OCI-LY7 (cell line): ENCODE measurements at regions of chr13 and their contacts with region 1.

Region 1: DNA sequence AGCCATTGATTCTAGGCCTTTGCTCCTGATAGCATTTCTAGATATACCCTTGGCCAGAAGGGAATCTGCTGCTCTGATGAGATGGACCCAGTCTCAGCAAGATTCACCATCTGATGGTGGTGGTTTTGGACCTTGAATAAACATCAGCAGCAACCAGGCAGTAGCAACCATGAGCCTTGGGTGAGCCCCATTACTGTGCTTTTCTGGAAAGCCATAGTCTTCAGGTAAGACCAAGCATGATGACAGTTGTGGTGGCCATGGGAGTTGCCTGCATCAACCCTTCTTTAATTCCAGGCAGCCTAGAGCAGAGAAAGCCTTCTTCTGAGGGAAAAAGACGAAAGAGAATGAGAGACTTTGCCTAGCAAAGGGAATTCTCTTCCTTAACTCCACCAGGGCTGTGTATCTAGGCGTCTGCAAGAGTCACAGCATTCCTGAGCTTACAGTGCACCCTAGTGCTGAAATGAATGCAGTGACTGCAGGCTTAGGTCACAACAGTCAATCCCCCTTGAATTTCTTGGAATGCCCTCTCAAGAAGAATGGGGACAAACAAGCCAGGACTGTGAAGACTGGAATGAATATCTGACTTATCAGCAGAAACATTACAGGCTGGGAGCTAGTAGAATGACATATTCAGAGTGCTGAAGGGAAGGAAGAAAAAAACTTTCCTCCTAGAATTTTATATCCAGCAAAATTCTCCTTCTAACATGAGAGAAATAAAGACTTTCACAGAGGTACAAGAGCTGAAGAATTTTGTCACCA is 942.4 kb upstream of the PCDH20 start:
- DNase-seq: peak; percentile 74
- H3K4me3 ChIP-seq: no peak overlapping the region
- H3K27ac ChIP-seq: no peak overlapping the region
- H3K4me1 ChIP-seq: peaks cover 3% of the 10 kb centered on the region
- CTCF ChIP-seq: peak; percentile 88

Region 2: GRCh38 chr13:61880578-61881283 is 477.3 kb before region 1 on chr13:
- CTCF ChIA-PET with region 1: no interaction called
- POLR2A ChIA-PET with region 1: no interaction called
- intact Hi-C with region 1: loop called (anchors 2 kb)
- DNase-seq: peak; percentile 41
- H3K4me3 ChIP-seq: no peak overlapping the region
- H3K27ac ChIP-seq: no peak overlapping the region
- H3K4me1 ChIP-seq: no peaks in the 10 kb centered on the region
- CTCF ChIP-seq: peak; percentile 85

Region 3: GRCh38 chr13:62014299-62014698 is 343.8 kb before region 1 on chr13:
- CTCF ChIA-PET with region 1: no interaction called
- POLR2A ChIA-PET with region 1: no interaction called
- intact Hi-C with region 1: loop called (anchors 1 kb)
- DNase-seq: peak; percentile 32
- H3K4me3 ChIP-seq: no peak overlapping the region
- H3K27ac ChIP-seq: no peak overlapping the region
- H3K4me1 ChIP-seq: no peaks in the 10 kb centered on the region
- CTCF ChIP-seq: peak; percentile 72

Region 4: GRCh38 chr13:62320129-62321108 is 37.6 kb before region 1 on chr13:
- CTCF ChIA-PET with region 1: no interaction called
- POLR2A ChIA-PET with region 1: interaction called, 3 read pairs
- intact Hi-C with region 1: loop called (anchors 2 kb)
- DNase-seq: peak; percentile 76
- H3K4me3 ChIP-seq: no peak overlapping the region
- H3K27ac ChIP-seq: no peak overlapping the region
- H3K4me1 ChIP-seq: peaks cover 14% of the 10 kb centered on the region
- CTCF ChIP-seq: peak; percentile 96